Activated CD4-positive, alpha-beta memory T cell treated with anti-CD3 and anti-CD28 coated beads for 36 hours (primary cell): ENCODE measurements at regions of chr10 and their contacts with region 1.

Region 1: GRCh38 chr10:97278491-97278989 is 13.9 kb downstream of the ARHGAP19 start:
- DNase-seq: no peak
- H3K4me3 Mint-ChIP-seq: no peak overlapping the region
- H3K27ac Mint-ChIP-seq: no peak overlapping the region
- H3K4me1 Mint-ChIP-seq: peaks cover 26% of the 10 kb centered on the region
- H3K27me3 Mint-ChIP-seq: no peaks in the 10 kb centered on the region

Region 2: DNA sequence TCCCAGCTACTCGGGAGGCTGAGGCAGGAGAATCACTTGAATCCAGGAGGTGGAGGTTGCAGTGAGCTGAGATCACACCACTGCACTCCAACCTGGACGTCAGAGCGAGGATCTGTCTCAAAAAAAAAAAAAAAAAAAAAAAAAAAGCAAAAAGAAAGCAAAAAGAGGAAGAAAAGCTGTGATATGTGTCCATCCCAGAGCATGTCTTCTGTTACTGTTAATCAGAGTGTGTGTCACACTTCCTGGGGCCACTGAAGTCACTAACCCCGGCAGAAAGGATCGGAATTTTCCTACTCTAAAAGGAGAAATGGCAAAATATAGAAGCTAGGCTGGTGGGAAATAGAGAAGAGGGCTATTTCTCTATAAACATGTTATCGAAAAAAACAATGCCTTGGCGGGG is 570.1 kb before region 1 on chr10:
- CTCF ChIA-PET with region 1: no interaction called
- POLR2A ChIA-PET with region 1: no interaction called
- intact Hi-C with region 1: no loop called
- DNase-seq: no peak
- H3K4me3 Mint-ChIP-seq: no peak overlapping the region
- H3K27ac Mint-ChIP-seq: no peak overlapping the region
- H3K4me1 Mint-ChIP-seq: no peaks in the 10 kb centered on the region
- H3K27me3 Mint-ChIP-seq: no peaks in the 10 kb centered on the region

Region 3: DNA sequence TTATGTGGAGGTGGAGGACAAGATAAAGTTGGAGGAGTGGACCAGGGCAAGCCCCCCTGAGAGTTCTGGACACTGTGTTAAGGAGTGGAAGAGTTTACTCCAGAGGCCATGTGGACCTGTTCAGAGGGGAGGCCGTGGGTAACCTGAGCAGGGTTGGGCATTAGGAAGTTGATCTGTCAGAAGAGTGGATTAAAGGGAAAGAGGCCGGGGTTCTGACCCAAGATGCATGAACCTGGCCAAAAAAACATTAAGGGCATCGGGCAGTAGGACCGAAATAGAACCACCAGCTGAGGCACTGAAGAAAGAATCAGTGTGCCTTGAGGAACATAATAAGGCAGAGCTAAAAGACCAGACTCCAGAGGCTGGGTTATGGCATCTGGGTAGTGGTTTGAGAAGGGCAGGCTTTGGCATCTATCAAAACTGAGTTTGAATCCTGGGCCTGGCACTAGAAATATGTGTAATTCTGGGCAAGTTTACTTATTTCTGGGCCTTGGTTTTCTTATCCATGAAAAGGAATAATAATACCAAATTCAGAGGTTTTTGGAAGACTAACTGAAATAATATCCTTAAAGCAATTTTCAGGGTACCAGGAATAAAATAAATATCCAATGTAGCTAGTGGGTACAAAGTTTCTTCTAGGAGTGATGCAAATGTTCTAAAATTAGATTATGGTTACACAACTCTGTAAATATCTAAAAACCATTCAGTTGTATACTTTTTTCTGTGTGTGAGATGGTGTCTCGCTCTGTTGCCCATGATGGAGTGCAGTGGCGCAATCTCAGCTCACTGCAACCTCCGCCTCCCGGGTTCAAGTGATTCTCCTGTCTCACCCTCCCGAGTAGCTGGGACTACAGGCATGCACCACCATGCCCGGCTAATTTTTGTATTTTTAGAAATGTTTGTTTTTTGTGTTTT is 29.6 kb after region 1 on chr10:
- CTCF ChIA-PET with region 1: interaction called, 16 read pairs
- POLR2A ChIA-PET with region 1: interaction called, 5 read pairs
- intact Hi-C with region 1: no loop called
- DNase-seq: no peak
- H3K4me3 Mint-ChIP-seq: no peak overlapping the region
- H3K27ac Mint-ChIP-seq: no peak overlapping the region
- H3K4me1 Mint-ChIP-seq: no peaks in the 10 kb centered on the region
- H3K27me3 Mint-ChIP-seq: no peaks in the 10 kb centered on the region